Kidney (tissue), 22 donors: ENCODE measurements at regions of chr5 and their contacts with region 1.

Region 1: DNA sequence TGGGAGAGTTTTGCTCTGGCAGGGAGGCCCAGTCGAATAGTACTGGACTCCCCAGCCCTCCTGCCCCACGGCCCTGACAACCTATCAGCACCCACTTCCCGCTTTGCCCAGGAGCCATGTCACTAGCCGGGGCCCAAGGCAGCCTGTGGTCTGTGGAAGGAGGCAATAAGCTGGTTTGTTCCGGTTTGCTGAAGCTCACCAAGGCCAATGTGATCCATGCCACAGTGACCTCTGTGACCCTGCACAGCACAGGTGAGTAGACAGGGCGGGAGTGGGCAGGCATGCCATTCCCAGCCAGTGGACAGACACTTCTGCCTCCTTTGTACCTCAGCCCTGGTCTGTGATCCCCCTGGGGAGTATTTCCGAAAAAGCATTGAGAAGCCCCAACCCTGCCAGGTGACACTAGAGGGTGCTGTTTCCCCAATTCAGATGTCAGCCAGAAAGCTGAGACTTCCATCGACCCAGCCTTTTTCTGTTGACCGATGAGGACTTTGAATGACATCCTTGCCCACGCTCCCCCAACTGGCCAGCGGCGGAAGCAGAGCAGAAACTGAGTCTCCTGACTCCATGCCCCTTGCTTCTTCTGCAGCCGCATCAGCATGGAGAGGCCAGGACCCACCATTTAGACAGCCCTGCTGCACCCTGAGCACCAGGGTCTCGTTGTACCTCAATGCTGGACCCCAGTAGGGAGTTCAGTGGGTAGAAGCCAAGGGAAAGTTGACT is 9.6 kb downstream of the PCYOX1L start:
- DNase-seq: peak in 4 of 5 donors; percentile 77 to 87 (median 80)
- H3K4me3 ChIP-seq: no peak overlapping the region
- H3K27ac ChIP-seq: no peak overlapping the region
- H3K4me1 ChIP-seq: peaks cover 0 to 10% (median 0%) of the 10 kb centered on the region in 3 donors
- H3K27me3 ChIP-seq: no peaks in the 10 kb centered on the region
- CTCF ChIP-seq: peak; percentile 49

Region 2: GRCh38 chr5:149422366-149423048 is 55.1 kb after region 1 on chr5:
- intact Hi-C with region 1: no loop called
- DNase-seq: peak; percentile 91 to 97 (median 95)
- H3K4me3 ChIP-seq: no peak overlapping the region
- H3K27ac ChIP-seq: peak overlapping the region; percentile 70 to 86
- H3K4me1 ChIP-seq: peaks cover 4 to 18% (median 7%) of the 10 kb centered on the region in 3 donors
- H3K27me3 ChIP-seq: no peaks in the 10 kb centered on the region
- CTCF ChIP-seq: no peak

Region 3: DNA sequence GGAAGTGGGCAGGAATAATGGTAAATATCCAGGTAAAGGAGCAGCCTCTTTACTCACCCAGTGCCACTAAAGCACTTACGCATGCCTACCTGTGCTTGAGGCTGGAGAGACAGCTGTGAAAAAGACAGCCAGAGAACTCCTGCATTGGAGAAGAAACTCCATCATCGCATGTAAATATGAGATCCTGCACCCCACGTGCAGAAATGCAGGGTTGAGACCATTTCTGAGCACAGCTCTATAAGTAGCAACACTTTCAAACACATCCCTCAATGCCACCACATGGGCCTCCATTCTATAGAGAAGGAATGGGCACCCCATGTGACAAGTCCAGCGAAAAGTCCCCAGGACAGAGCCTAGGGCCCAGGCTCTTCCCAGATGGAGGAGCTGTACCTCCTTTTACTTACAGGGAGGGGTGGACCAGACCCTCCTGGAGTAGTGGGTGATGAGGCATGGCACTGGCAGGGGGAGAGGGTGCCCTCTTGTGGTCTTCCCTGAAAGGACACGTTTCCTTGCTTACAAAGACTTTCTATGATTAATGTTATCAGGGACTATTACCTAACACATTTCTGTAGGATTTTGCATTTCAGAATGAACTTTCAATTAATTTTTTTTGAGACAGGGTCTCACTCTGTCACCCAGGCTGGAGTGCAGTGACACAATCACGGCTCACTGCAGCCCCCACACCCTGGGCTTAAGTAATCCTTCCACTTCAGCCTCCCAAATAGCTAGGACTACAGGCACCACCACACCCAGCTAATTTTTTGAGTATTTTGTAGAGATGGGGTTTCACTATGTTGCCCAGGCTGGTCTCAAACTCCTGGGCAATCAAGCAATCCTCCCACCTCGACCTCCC is 67.0 kb after region 1 on chr5:
- intact Hi-C with region 1: loop called (anchors 10 kb)
- DNase-seq: peak in 4 of 5 donors; percentile 74 to 81 (median 77)
- H3K4me3 ChIP-seq: no peak overlapping the region
- H3K27ac ChIP-seq: no peak overlapping the region
- H3K4me1 ChIP-seq: no peaks in the 10 kb centered on the region
- H3K27me3 ChIP-seq: no peaks in the 10 kb centered on the region
- CTCF ChIP-seq: peak; percentile 76